Caco-2 (cell line): ENCODE measurements at regions of chr12 and their contacts with region 1.

Region 1: GRCh38 chr12:111788178-111788654 is 21.5 kb downstream of the ALDH2 start:
- DNase-seq: peak; percentile 57 to 75
- H3K4me3 ChIP-seq: no peak overlapping the region
- H3K4me3 Mint-ChIP-seq: no peak overlapping the region
- H3K27ac Mint-ChIP-seq: peak overlapping the region; percentile 50
- H3K4me1 ChIP-seq: no peaks in the 10 kb centered on the region
- H3K4me1 Mint-ChIP-seq: no peaks in the 10 kb centered on the region
- H3K27me3 ChIP-seq: no peaks in the 10 kb centered on the region
- H3K27me3 Mint-ChIP-seq: no peaks in the 10 kb centered on the region
- CTCF ChIP-seq: peak; percentile 35 to 68

Region 2: GRCh38 chr12:111753144-111753881 is 34.9 kb before region 1 on chr12:
- CTCF ChIA-PET with region 1: no interaction called
- POLR2A ChIA-PET with region 1: no interaction called
- intact Hi-C with region 1: loop called (anchors 1 kb)
- DNase-seq: peak; percentile 70 to 77
- H3K4me3 ChIP-seq: no peak overlapping the region
- H3K4me3 Mint-ChIP-seq: no peak overlapping the region
- H3K27ac Mint-ChIP-seq: no peak overlapping the region
- H3K4me1 ChIP-seq: no peaks in the 10 kb centered on the region
- H3K4me1 Mint-ChIP-seq: no peaks in the 10 kb centered on the region
- H3K27me3 ChIP-seq: no peaks in the 10 kb centered on the region
- H3K27me3 Mint-ChIP-seq: no peaks in the 10 kb centered on the region
- CTCF ChIP-seq: peak; percentile 83 to 89